MCF 10A (cell line): ENCODE measurements at regions of chr6 and their contacts with region 1.

Region 1: GRCh38 chr6:101760843-101761621 is 367.5 kb downstream of the GRIK2 start:
- DNase-seq: peak; percentile 95
- H3K4me3 Mint-ChIP-seq: peak overlapping the region; percentile 14
- H3K27ac Mint-ChIP-seq: peak overlapping the region; percentile 73
- H3K4me1 Mint-ChIP-seq: peaks cover 15% of the 10 kb centered on the region
- H3K27me3 Mint-ChIP-seq: no peaks in the 10 kb centered on the region
- CTCF ChIP-seq: no peak

Region 2: DNA sequence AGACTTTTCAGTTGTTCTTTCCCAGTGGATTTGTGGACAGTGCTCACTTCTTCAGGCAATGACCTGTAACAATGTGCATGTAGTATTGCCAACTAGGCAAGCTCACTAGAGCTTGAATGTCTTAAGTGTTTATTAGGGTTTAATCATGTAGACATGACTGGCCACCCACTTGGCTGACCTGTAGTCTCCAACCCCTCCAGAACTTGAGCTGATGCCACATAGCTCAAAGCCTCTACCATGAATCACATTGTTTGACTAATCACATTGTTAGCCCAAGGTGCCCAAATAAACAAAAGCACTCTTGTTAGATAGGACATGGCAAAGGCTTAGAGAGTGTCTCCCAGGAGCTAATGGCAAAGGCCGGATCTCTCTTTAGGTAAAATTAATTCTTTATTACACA is 94.8 kb before region 1 on chr6:
- CTCF ChIA-PET with region 1: no interaction called
- POLR2A ChIA-PET with region 1: interaction called, 11 read pairs
- intact Hi-C with region 1: no loop called
- DNase-seq: peak; percentile 93
- H3K4me3 Mint-ChIP-seq: no peak overlapping the region
- H3K27ac Mint-ChIP-seq: no peak overlapping the region
- H3K4me1 Mint-ChIP-seq: peaks cover 32% of the 10 kb centered on the region
- H3K27me3 Mint-ChIP-seq: no peaks in the 10 kb centered on the region
- CTCF ChIP-seq: no peak

Region 3: GRCh38 chr6:101722991-101723579 is 37.9 kb before region 1 on chr6:
- CTCF ChIA-PET with region 1: no interaction called
- POLR2A ChIA-PET with region 1: no interaction called
- intact Hi-C with region 1: loop called (anchors 2 kb)
- DNase-seq: peak; percentile 86
- H3K4me3 Mint-ChIP-seq: no peak overlapping the region
- H3K27ac Mint-ChIP-seq: peak overlapping the region; percentile 78
- H3K4me1 Mint-ChIP-seq: peaks cover 17% of the 10 kb centered on the region
- H3K27me3 Mint-ChIP-seq: no peaks in the 10 kb centered on the region
- CTCF ChIP-seq: no peak